HepG2 (cell line): ENCODE measurements at regions of chr5 and their contacts with region 1.

Region 1: DNA sequence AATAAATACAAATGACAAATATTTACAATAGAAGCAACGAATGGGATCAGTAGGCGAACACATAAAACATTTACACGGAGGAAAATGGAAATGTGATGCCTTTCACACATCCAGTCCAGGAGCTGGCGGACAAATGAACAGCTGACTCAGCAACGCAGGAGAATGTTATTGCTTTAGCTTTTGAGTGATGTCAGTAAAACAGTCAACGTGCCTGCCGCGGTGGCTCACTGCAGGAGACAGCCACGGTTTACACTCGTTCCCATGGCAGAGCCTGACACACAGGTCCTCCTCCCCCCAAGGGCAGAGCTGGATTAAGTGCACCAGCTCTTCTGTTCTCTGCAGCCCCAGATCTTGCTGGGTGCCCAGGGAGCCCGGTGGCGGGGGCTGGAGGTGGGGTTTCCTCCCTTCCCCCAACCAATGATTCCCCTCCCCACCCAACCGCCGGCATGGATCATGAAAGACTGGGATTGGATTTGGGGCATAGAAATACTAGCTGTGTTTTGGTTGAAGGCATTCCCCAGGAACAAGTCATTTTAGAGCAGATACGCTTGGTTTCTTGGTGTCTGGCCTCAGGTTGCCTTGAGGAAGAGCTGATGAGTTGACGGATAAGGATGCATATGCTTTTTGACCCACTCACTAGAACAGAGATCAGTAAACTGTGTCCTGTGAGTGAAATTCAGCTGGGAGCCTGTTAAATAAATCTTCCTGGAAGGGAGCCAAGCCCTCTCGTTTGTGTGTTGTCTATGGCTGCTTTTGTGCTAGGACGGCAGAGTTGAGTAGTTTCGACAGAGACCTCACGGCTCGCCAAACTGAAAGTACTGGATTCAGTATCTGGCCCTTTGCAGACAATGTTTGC is 12.5 kb downstream of the STC2 start:
- DNase-seq: no peak
- ATAC-seq: no peak
- H3K4me3 ChIP-seq: no peak overlapping the region
- H3K27ac ChIP-seq: peak overlapping the region; percentile 28
- H3K4me1 ChIP-seq: peaks cover 36% of the 10 kb centered on the region
- H3K27me3 ChIP-seq: no peaks in the 10 kb centered on the region
- CTCF ChIP-seq: no peak
- EP300 ChIP-seq: no peak
- POLR2A ChIP-seq: peak in 1 of 2 experiments; percentile 73; a peak in 2 of 4 replicates
- RAD21 ChIP-seq: no peak

Region 2: DNA sequence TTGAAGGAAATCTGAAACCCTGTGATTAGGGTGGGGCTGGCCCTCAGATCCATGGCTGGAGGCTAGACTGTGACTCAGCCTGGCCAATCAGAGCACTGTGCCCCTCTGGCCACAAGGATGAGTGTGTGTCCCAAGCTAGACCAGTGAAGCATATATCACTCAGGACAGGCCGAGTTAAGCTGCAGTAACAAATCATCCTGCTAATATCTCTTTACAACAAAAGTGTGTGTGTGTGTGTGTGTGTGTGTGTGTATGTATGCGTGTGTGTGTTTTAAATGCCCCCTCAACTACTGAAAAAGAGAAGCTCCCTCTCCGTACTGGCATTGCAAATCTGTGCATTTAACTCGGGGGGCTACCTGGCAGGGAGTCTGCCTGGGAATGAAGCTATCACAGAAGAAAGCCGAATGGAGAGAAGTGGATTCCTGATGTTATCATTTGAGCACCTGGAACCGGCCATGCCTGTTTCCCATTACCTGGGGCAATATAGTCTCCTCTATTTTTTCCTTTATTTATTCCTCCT is 13.1 kb before region 1 on chr5:
- CTCF ChIA-PET with region 1: no interaction called
- POLR2A ChIA-PET with region 1: interaction called, 6 read pairs
- in situ Hi-C with region 1: no loop called
- intact Hi-C with region 1: loop called (anchors 2 kb)
- DNase-seq: peak; percentile 44
- ATAC-seq: peak; percentile 48
- H3K4me3 ChIP-seq: peak overlapping the region in 2 of 3 experiments; percentile 27 to 68; a peak in 4 of 6 replicates
- H3K27ac ChIP-seq: peak overlapping the region; percentile 60
- H3K4me1 ChIP-seq: peaks cover 79% of the 10 kb centered on the region
- H3K27me3 ChIP-seq: no peaks in the 10 kb centered on the region
- CTCF ChIP-seq: no peak
- EP300 ChIP-seq: no peak
- POLR2A ChIP-seq: no peak
- RAD21 ChIP-seq: no peak